ENCODE measurements at regions of chr1 and their contacts with region 1.

Region 1: DNA sequence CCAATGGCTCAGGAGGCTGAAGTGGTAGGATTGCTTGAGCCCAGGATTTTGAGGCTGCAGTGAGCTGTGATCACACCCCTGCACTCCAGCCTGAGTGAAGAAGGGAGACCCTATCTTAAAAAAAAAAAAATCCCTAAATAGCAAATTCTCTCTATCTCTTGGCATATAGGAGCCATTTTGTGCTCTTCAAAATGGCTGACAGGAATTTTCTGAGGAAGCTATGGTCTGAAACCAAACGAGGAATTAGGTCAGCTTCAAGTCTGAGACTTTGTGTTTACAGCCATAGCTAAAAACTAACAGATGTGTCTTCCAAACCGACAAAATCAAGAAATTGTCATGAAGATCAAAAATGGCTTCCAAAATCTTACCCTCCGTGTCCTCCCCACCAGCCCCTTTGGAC is 10.6 kb downstream of the CD247 start:
- DNase-seq: no peak
- ATAC-seq: no peak
- H3K4me3 ChIP-seq: no peak overlapping the region
- H3K27ac ChIP-seq: no peak overlapping the region
- H3K4me1 ChIP-seq: no peaks in the 10 kb centered on the region
- H3K27me3 ChIP-seq: peaks cover 15% of the 10 kb centered on the region
- CTCF ChIP-seq: no peak

Region 2: GRCh38 chr1:167695147-167695546 is 187.4 kb after region 1 on chr1:
- CTCF ChIA-PET with region 1: no interaction called
- POLR2A ChIA-PET with region 1: interaction called, 10 read pairs
- in situ Hi-C with region 1: no loop called
- intact Hi-C with region 1: no loop called
- DNase-seq: no peak
- ATAC-seq: no peak
- H3K4me3 ChIP-seq: no peak overlapping the region
- H3K27ac ChIP-seq: no peak overlapping the region
- H3K4me1 ChIP-seq: no peaks in the 10 kb centered on the region; the same call in 1 of the 2 replicates
- H3K27me3 ChIP-seq: no peaks in the 10 kb centered on the region
- CTCF ChIP-seq: no peak